ENCODE measurements at regions of chr12 and their contacts with region 1.

Region 1: GRCh38 chr12:93378373-93379325 is 924 bp downstream of the NUDT4 start:
- DNase-seq: peak; percentile 39 to 68 (median 57)
- ATAC-seq: peak; percentile 2
- H3K4me3 ChIP-seq: peak overlapping the region; percentile 97
- H3K27ac ChIP-seq: peak overlapping the region; percentile 88
- H3K4me1 ChIP-seq: peaks cover 14 to 19% of the 10 kb centered on the region in 2 experiments; a peak in 4 of 5 replicates
- H3K27me3 ChIP-seq: no peaks in the 10 kb centered on the region
- CTCF ChIP-seq: no peak
- EP300 ChIP-seq: no peak
- POLR2A ChIP-seq: no peak; the same call in 1 of the 2 replicates
- RAD21 ChIP-seq: no peak

Region 2: DNA sequence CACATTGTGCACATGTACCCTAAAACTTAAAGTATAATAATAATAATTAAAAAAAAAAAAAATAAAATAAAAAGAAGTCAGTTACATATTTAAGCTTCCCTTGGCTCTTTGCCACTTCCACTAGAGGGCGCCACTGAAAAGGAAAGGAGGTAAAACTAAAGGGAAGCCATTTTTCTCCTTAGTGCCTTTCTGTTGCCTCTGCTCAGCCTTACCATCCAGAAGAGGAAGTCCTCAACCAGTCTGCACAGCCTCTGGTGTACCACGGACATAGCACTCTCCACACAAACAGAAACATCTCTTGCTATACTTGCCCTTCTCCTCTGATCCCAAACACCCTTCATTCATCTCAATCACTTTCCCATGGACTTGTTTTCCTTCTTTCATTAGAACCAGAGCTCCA is 280.6 kb before region 1 on chr12:
- CTCF ChIA-PET with region 1: interaction called, 3 read pairs
- POLR2A ChIA-PET with region 1: no interaction called
- in situ Hi-C with region 1: no loop called
- intact Hi-C with region 1: loop called (anchors 5 kb)
- DNase-seq: peak; percentile 37 to 81 (median 52)
- ATAC-seq: peak; percentile 87
- H3K4me3 ChIP-seq: no peak overlapping the region
- H3K27ac ChIP-seq: no peak overlapping the region
- H3K4me1 ChIP-seq: peaks cover 0 to 9% of the 10 kb centered on the region in 2 experiments; a peak in 2 of 5 replicates
- H3K27me3 ChIP-seq: no peaks in the 10 kb centered on the region
- CTCF ChIP-seq: peak; percentile 57 to 71 (median 57); a peak in 5 of 6 replicates
- EP300 ChIP-seq: no peak
- POLR2A ChIP-seq: no peak
- RAD21 ChIP-seq: peak; percentile 29 to 73; a peak in 3 of 4 replicates

Region 3: GRCh38 chr12:93176165-93176564 is 202.5 kb before region 1 on chr12:
- CTCF ChIA-PET with region 1: no interaction called
- POLR2A ChIA-PET with region 1: no interaction called
- in situ Hi-C with region 1: no loop called
- intact Hi-C with region 1: loop called (anchors 5 kb)
- DNase-seq: no peak
- ATAC-seq: no peak
- H3K4me3 ChIP-seq: no peak overlapping the region
- H3K27ac ChIP-seq: no peak overlapping the region
- H3K4me1 ChIP-seq: peaks cover 0 to 5% of the 10 kb centered on the region in 2 experiments; a peak in 2 of 5 replicates
- H3K27me3 ChIP-seq: no peaks in the 10 kb centered on the region
- CTCF ChIP-seq: no peak
- EP300 ChIP-seq: no peak
- POLR2A ChIP-seq: no peak
- RAD21 ChIP-seq: no peak

Region 4: DNA sequence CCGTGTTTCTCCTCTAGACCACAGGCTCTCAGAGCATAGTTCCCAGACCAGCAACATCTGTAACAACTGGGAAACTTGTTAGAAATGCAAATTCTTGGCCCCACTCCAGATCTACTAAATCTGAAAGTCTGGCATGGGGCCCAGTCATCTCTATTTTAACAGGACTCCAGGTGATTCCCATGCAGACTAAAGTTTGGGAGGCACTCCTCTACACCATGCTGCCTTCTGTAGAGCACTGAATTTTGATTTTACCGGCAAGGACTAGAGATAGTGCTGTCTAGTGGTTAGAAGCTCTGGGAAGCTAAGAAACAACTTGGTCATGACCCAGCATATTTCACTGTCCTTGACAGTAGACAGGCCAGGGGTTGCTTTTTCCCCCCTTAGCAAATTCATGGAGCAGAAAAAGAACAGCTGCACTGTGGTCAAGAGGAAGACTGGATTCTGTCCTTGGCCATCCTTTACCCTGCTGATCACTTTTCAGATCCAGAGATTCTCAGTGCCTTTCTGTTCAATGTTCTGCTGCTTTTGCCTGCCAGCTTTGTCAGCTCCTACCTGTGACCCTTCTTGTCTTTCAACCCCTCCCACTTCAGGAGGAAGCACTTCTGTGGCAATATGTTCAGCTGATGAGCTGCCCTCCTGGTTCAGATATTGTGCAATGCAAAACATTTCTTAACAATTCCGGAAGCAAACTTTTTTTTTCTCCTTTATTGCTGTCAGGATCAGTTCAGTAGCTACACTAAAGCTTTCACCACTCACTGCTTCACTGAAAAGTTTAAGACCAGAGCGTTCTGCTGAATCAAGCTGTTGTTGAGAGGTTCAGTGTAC is 134.7 kb before region 1 on chr12:
- CTCF ChIA-PET with region 1: no interaction called
- POLR2A ChIA-PET with region 1: interaction called, 4 read pairs
- in situ Hi-C with region 1: no loop called
- intact Hi-C with region 1: loop called (anchors 5 kb)
- DNase-seq: peak in 2 of 4 experiments; percentile 34 to 60
- ATAC-seq: peak; percentile 79
- H3K4me3 ChIP-seq: no peak overlapping the region
- H3K27ac ChIP-seq: 0 out of 3 replicates have a peak overlapping the region, but pooled peaks have one; percentile 15
- H3K4me1 ChIP-seq: peaks cover 5 to 35% of the 10 kb centered on the region in 2 experiments; a peak in 3 of 5 replicates
- H3K27me3 ChIP-seq: no peaks in the 10 kb centered on the region
- CTCF ChIP-seq: no peak
- EP300 ChIP-seq: peak; percentile 57; the same call in 1 of the 2 replicates
- POLR2A ChIP-seq: no peak
- RAD21 ChIP-seq: no peak

Region 5: GRCh38 chr12:93363841-93364297 is 14.8 kb before region 1 on chr12:
- CTCF ChIA-PET with region 1: no interaction called
- POLR2A ChIA-PET with region 1: interaction called, 14 read pairs
- in situ Hi-C with region 1: no loop called
- intact Hi-C with region 1: no loop called
- DNase-seq: peak in 2 of 4 experiments; percentile 36 to 48
- ATAC-seq: peak; percentile 73
- H3K4me3 ChIP-seq: no peak overlapping the region
- H3K27ac ChIP-seq: peak overlapping the region; percentile 59; the same call in 2 of the 3 replicates
- H3K4me1 ChIP-seq: peaks cover 4 to 10% of the 10 kb centered on the region in 2 experiments; a peak in 4 of 5 replicates
- H3K27me3 ChIP-seq: no peaks in the 10 kb centered on the region
- CTCF ChIP-seq: no peak
- EP300 ChIP-seq: no peak
- POLR2A ChIP-seq: no peak
- RAD21 ChIP-seq: no peak

Region 6: GRCh38 chr12:93502802-93503623 is 124.4 kb after region 1 on chr12:
- CTCF ChIA-PET with region 1: no interaction called
- POLR2A ChIA-PET with region 1: no interaction called
- in situ Hi-C with region 1: no loop called
- intact Hi-C with region 1: no loop called
- DNase-seq: peak in 2 of 4 experiments; percentile 20 to 64
- ATAC-seq: peak; percentile 76
- H3K4me3 ChIP-seq: no peak overlapping the region
- H3K27ac ChIP-seq: no peak overlapping the region
- H3K4me1 ChIP-seq: no peaks in the 10 kb centered on the region
- H3K27me3 ChIP-seq: no peaks in the 10 kb centered on the region
- CTCF ChIP-seq: peak; percentile 49 to 85 (median 71); a peak in 5 of 6 replicates
- EP300 ChIP-seq: no peak
- POLR2A ChIP-seq: no peak
- RAD21 ChIP-seq: peak; percentile 90 to 92